PC-3 (cell line): ENCODE measurements at regions of chr7 and their contacts with region 1.

Region 1: GRCh38 chr7:84614821-84615505 is 420.4 kb upstream of the SEMA3A start:
- DNase-seq: peak; percentile 31
- ATAC-seq: no peak
- H3K4me3 ChIP-seq: no peak overlapping the region
- H3K27ac ChIP-seq: no peak overlapping the region
- H3K4me1 ChIP-seq: peaks cover 8% of the 10 kb centered on the region
- H3K27me3 ChIP-seq: no peaks in the 10 kb centered on the region
- CTCF ChIP-seq: peak; percentile 44

Region 2: DNA sequence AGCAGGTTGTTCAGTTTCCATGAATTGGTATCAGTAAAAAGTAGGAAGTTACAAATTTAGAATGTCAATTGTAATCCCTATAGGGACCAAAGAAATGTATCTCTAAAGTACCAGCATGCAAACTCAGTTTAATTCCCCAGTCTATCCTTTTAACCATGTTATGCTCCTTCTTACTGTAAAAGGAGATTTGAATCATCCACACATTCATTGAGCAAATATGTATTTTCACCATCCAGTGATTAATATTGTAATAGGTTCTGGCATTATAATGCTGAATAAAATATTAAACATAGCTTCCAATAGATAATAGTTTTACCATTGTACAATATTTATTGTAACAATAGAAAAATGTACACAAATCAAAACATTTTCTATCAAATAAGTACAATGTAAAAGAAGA is 192.2 kb before region 1 on chr7:
- CTCF ChIA-PET with region 1: no interaction called
- POLR2A ChIA-PET with region 1: no interaction called
- intact Hi-C with region 1: no loop called
- DNase-seq: peak; percentile 31
- ATAC-seq: no peak
- H3K4me3 ChIP-seq: no peak overlapping the region
- H3K27ac ChIP-seq: no peak overlapping the region
- H3K4me1 ChIP-seq: no peaks in the 10 kb centered on the region
- H3K27me3 ChIP-seq: no peaks in the 10 kb centered on the region
- CTCF ChIP-seq: no peak

Region 3: GRCh38 chr7:84663224-84663623 is 48.3 kb after region 1 on chr7:
- CTCF ChIA-PET with region 1: no interaction called
- POLR2A ChIA-PET with region 1: no interaction called
- intact Hi-C with region 1: loop called (anchors 2 kb)
- DNase-seq: peak; percentile 43
- ATAC-seq: peak; percentile 62
- H3K4me3 ChIP-seq: no peak overlapping the region
- H3K27ac ChIP-seq: no peak overlapping the region
- H3K4me1 ChIP-seq: peaks cover 9% of the 10 kb centered on the region
- H3K27me3 ChIP-seq: no peaks in the 10 kb centered on the region
- CTCF ChIP-seq: no peak